Activated naive CD4-positive, alpha-beta T cell treated with anti-CD3 and anti-CD28 coated beads for 36 hours (primary cell): ENCODE measurements at regions of chr10 and their contacts with region 1.

Region 1: GRCh38 chr10:28381903-28382347 is 79.1 kb upstream of the MPP7 start:
- DNase-seq: peak; percentile 93
- H3K4me3 Mint-ChIP-seq: no peak overlapping the region
- H3K27ac Mint-ChIP-seq: no peak overlapping the region
- H3K4me1 Mint-ChIP-seq: peaks cover 36% of the 10 kb centered on the region
- H3K27me3 Mint-ChIP-seq: no peaks in the 10 kb centered on the region

Region 2: DNA sequence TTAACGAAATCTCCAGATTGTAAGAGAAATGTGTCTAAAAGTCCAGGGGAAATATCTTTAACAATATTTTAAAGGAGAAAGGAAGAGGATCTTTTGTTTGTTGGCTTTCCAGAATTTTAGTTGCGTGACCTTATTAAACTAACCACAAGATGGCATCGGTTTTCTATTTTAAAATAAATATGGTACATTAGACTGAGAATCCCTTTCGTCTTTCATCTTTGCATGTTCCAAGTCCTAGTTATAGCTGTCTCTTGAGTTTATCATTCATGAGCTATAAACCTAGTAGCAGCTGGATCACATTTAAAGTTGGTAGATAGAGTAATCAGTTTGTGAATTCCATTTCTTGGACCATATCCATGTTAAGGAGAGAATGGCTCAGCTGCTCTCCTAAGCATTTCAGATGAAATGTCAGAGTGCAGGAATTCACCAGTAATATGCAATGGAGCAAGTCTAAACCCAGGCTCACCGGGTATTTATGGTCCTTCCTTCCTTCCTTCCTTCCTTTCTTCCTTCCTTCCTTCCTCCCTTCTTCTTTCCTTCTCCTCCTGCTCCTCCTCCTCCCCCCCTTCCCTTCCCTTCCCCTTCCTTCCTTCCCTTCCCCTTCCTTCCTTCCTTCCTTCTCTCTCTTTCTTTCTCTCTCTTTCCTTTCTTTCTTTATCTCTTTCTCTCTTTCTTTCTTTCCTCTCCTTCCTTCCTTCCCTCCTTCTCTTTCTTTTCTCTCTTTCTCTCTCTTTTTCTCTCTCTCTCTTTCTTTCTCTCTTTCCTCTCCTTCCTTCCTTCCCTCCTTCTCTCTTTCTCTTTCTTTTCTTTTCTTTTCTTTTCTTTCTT is 935.6 kb before region 1 on chr10:
- CTCF ChIA-PET with region 1: no interaction called
- intact Hi-C with region 1: loop called (anchors 5 kb)
- DNase-seq: no peak
- H3K4me3 Mint-ChIP-seq: no peak overlapping the region
- H3K27ac Mint-ChIP-seq: no peak overlapping the region
- H3K4me1 Mint-ChIP-seq: peaks cover 7% of the 10 kb centered on the region
- H3K27me3 Mint-ChIP-seq: no peaks in the 10 kb centered on the region

Region 3: GRCh38 chr10:27783660-27784059 is 598.3 kb before region 1 on chr10:
- CTCF ChIA-PET with region 1: interaction called, 3 read pairs
- intact Hi-C with region 1: loop called (anchors 1 kb)
- DNase-seq: peak; percentile 57
- H3K4me3 Mint-ChIP-seq: no peak overlapping the region
- H3K27ac Mint-ChIP-seq: no peak overlapping the region
- H3K4me1 Mint-ChIP-seq: no peaks in the 10 kb centered on the region
- H3K27me3 Mint-ChIP-seq: peaks cover 8% of the 10 kb centered on the region

Region 4: DNA sequence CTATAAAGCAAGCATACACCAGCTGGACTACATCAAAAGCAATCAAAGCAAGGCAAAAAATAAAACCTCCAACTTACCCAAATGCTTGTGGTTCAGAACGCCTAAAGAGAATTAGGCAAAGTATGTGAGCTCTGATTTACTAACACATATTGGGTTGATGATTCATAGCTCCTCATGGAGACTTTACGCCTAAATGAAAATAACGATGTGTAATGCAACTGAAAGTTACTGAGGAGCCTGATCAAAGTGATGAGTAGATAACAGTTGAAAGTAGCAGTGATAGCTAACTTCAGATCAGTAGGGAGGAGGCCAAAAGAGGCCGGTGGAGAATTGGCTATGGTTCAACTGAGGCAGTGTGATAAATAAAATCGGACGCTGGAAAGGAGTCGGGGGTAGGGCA is 164.1 kb before region 1 on chr10:
- CTCF ChIA-PET with region 1: interaction called, 6 read pairs
- intact Hi-C with region 1: loop called (anchors 1 kb)
- DNase-seq: peak; percentile 45
- H3K4me3 Mint-ChIP-seq: no peak overlapping the region
- H3K27ac Mint-ChIP-seq: no peak overlapping the region
- H3K4me1 Mint-ChIP-seq: peaks cover 48% of the 10 kb centered on the region
- H3K27me3 Mint-ChIP-seq: no peaks in the 10 kb centered on the region

Region 5: GRCh38 chr10:28291881-28292297 is 90.0 kb before region 1 on chr10:
- CTCF ChIA-PET with region 1: interaction called, 31 read pairs
- intact Hi-C with region 1: no loop called
- DNase-seq: peak; percentile 84
- H3K4me3 Mint-ChIP-seq: no peak overlapping the region
- H3K27ac Mint-ChIP-seq: peak overlapping the region; percentile 89
- H3K4me1 Mint-ChIP-seq: peaks cover 73% of the 10 kb centered on the region
- H3K27me3 Mint-ChIP-seq: no peaks in the 10 kb centered on the region

Region 6: GRCh38 chr10:28326516-28327490 is 55.1 kb before region 1 on chr10:
- CTCF ChIA-PET with region 1: interaction called, 59 read pairs
- intact Hi-C with region 1: no loop called
- DNase-seq: no peak
- H3K4me3 Mint-ChIP-seq: peak overlapping the region; percentile 37
- H3K27ac Mint-ChIP-seq: no peak overlapping the region
- H3K4me1 Mint-ChIP-seq: peaks cover 46% of the 10 kb centered on the region
- H3K27me3 Mint-ChIP-seq: no peaks in the 10 kb centered on the region

Region 7: DNA sequence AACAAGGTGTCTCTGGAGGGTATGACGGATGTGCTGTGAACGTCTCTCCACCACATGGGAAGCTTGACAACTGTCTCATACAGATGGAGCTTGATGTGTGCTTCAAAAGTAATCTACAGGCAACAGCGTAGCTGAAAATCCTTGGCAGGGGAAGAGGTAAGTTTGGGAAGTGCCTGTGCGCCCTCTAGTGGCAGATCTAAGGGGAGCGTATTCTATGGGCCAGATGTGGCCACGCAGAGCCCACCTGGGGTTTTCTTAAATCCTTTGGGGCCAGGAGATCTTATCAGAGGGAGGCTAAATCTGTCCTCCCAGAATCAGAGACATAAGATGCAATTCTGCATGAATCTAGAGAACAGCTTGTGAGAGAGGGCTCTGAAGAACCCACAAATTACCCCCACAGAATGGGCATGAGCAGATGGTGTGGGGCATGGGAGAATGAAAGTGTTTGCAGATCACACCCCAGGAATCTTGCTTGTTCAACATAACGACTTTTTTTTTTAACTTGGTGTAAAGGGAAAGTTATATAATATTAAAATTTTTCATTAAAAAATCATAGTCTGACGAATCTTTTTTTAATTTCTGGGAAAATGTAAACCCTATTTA is 12.1 kb after region 1 on chr10:
- CTCF ChIA-PET with region 1: interaction called, 62 read pairs
- intact Hi-C with region 1: loop called (anchors 1 kb)
- DNase-seq: peak; percentile 83
- H3K4me3 Mint-ChIP-seq: no peak overlapping the region
- H3K27ac Mint-ChIP-seq: no peak overlapping the region
- H3K4me1 Mint-ChIP-seq: peaks cover 4% of the 10 kb centered on the region
- H3K27me3 Mint-ChIP-seq: no peaks in the 10 kb centered on the region

Region 8: GRCh38 chr10:28975891-28976531 is 594.1 kb after region 1 on chr10:
- CTCF ChIA-PET with region 1: no interaction called
- intact Hi-C with region 1: no loop called
- DNase-seq: no peak
- H3K4me3 Mint-ChIP-seq: no peak overlapping the region
- H3K27ac Mint-ChIP-seq: no peak overlapping the region
- H3K4me1 Mint-ChIP-seq: no peaks in the 10 kb centered on the region
- H3K27me3 Mint-ChIP-seq: peaks cover 11% of the 10 kb centered on the region